Naive thymus-derived CD4-positive, alpha-beta T cell (primary cell): ENCODE measurements at regions of chr18 and their contacts with region 1.

Region 1: DNA sequence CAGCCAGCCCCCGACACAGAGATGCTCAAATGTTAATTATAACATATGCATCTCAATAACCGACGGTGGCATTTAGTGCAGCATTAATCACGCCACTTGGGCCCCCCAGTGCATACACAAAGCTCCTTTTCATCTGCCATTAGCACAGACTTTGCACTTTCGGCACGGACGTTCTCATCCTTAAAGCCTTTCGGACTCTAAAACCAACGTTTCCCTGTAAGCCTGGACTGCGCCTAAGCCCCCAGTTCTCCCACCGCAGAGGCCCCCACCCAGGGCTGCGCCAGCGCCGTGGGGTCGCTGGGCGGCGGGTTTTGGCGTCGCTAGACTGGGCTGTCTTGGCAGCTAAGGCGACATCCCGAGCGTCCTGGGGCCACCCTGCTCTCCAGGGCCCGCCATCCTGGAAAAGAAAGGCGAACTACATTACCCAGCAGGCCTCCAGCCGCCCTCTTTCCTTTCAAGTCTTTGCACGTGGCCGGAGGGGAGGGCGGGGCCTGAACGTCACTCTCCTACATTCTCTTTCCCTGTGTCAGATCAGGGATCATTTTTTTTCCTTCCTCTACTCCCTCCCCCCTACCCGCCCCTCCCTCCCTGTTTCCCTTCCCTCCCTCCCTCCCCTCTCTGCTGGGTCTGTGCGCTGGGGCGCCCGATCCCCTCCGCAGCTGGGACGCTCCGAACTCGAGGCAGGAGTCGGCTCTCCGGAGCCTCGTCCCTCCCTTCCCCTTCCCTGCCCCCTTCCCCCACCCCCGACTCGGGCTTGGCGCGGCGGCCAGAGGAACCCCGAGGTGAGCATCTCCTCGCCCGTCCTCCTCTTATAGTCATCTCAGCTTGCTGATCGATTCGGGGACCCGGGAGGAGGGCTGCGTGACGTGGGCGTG is at the start of gene CTIF:
- DNase-seq: peak; percentile 17 to 71 (median 37)
- ATAC-seq: peak; percentile 78
- H3K4me3 ChIP-seq: peak within 1 kb of the TSS; percentile 75
- H3K4me3 Mint-ChIP-seq: peak within 1 kb of the TSS; percentile 73 to 95 (median 88)
- H3K27ac ChIP-seq: peak within 1 kb of the TSS; percentile 19
- H3K27ac Mint-ChIP-seq: peak within 1 kb of the TSS in 1 of 9 donors; percentile 46
- H3K4me1 ChIP-seq: peaks cover 0 to 5% of the 10 kb centered on the region in 2 donors
- H3K4me1 Mint-ChIP-seq: peaks cover 0 to 17% (median 0%) of the 10 kb centered on the region in 7 donors
- H3K27me3 ChIP-seq: no peaks in the 10 kb centered on the region
- H3K27me3 Mint-ChIP-seq: peaks cover 1 to 31% (median 6%) of the 10 kb centered on the region in 5 donors
- total RNA-seq, gene CTIF: 1.3 to 11.2 (median 2.5) TPM

Region 2: GRCh38 chr18:48410095-48410920 is 128.5 kb before region 1 on chr18:
- CTCF ChIA-PET with region 1: no interaction called
- POLR2A ChIA-PET with region 1: no interaction called
- intact Hi-C with region 1: loop called in 1 of 2 experiments (anchors 5 kb)
- DNase-seq: peak in 6 of 9 donors; percentile 9 to 87 (median 36)
- ATAC-seq: peak; percentile 91
- H3K4me3 ChIP-seq: peak overlapping the region; percentile 43
- H3K4me3 Mint-ChIP-seq: peak overlapping the region; percentile 50 to 84 (median 76)
- H3K27ac ChIP-seq: no peak overlapping the region
- H3K27ac Mint-ChIP-seq: no peak overlapping the region
- H3K4me1 ChIP-seq: peaks cover 0 to 6% of the 10 kb centered on the region in 2 donors
- H3K4me1 Mint-ChIP-seq: peaks cover 4 to 20% (median 14%) of the 10 kb centered on the region in 7 donors
- H3K27me3 ChIP-seq: peaks cover 4 to 5% of the 10 kb centered on the region in 2 donors
- H3K27me3 Mint-ChIP-seq: peaks cover 69 to 75% (median 71%) of the 10 kb centered on the region in 5 donors

Region 3: DNA sequence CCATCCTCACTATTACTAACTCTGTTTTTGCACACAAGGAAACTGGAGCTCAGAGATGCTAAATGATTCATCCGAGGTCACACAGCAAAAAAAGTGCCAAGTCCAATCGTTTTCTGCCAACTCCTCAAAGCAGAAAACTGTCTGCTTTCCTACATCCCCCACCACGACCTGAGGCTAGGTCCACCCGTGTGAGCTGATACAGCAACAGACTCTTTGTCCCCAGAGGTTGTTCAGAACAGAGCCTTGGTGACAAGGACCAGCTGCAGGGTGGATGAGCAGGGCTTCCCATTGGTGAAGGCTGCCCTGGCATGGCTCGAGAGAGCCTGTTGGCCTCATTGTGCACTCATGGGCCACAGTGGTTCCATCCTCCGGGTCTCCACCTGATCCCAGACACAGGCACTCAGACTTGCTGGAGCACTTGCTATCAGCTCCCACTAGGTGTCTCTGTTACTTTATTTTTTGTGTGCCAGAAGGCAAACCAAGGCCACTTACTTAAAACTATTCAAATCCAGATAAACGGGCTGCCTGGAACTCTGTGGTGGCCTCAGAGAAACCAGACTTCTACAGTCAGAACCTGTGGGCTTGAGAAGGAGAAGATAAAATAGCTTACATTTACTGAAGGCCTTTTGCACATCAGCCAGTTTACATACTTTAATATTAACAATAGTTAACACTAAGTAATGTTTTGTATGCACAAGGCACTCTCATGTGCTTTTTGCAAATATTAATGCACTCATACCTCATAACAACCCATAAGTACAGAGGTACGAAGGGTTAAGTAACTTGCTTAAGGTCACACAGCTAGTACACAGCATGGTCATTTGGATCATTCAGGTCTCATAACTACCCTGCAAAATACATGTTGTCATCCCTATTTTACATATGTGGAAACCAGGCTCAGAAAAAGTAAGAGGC is 62.9 kb before region 1 on chr18:
- CTCF ChIA-PET with region 1: no interaction called
- POLR2A ChIA-PET with region 1: no interaction called
- intact Hi-C with region 1: loop called in 1 of 2 experiments (anchors 10 kb)
- DNase-seq: peak in 6 of 9 donors; percentile 19 to 40 (median 29)
- ATAC-seq: peak; percentile 58
- H3K4me3 ChIP-seq: no peak overlapping the region
- H3K4me3 Mint-ChIP-seq: no peak overlapping the region
- H3K27ac ChIP-seq: no peak overlapping the region
- H3K27ac Mint-ChIP-seq: no peak overlapping the region
- H3K4me1 ChIP-seq: no peaks in the 10 kb centered on the region
- H3K4me1 Mint-ChIP-seq: no peaks in the 10 kb centered on the region
- H3K27me3 ChIP-seq: peaks cover 0 to 3% of the 10 kb centered on the region in 2 donors
- H3K27me3 Mint-ChIP-seq: peaks cover 14 to 54% (median 34%) of the 10 kb centered on the region in 5 donors